Gastrocnemius medialis (tissue), 4 donors: ENCODE measurements at regions of chr1 and their contacts with region 1.

Region 1: GRCh38 chr1:94843430-94843829 is 23.3 kb downstream of the SLC44A3 start:
- DNase-seq: no peak
- ATAC-seq: no peak
- H3K4me3 ChIP-seq: no peak overlapping the region
- H3K27ac ChIP-seq: no peak overlapping the region
- H3K4me1 ChIP-seq: no peaks in the 10 kb centered on the region
- H3K27me3 ChIP-seq: no peaks in the 10 kb centered on the region
- CTCF ChIP-seq: no peak
- POLR2A ChIP-seq: no peak

Region 2: GRCh38 chr1:93958726-93959100 is 884.7 kb before region 1 on chr1:
- in situ Hi-C with region 1: no loop called
- intact Hi-C with region 1: loop called (anchors 5 kb)
- DNase-seq: no peak
- ATAC-seq: no peak
- H3K4me3 ChIP-seq: no peak overlapping the region
- H3K27ac ChIP-seq: no peak overlapping the region
- H3K4me1 ChIP-seq: no peaks in the 10 kb centered on the region
- H3K27me3 ChIP-seq: no peaks in the 10 kb centered on the region
- CTCF ChIP-seq: no peak
- POLR2A ChIP-seq: no peak